B cell (primary cell): ENCODE measurements at regions of chr14 and their contacts with region 1.

Region 1: DNA sequence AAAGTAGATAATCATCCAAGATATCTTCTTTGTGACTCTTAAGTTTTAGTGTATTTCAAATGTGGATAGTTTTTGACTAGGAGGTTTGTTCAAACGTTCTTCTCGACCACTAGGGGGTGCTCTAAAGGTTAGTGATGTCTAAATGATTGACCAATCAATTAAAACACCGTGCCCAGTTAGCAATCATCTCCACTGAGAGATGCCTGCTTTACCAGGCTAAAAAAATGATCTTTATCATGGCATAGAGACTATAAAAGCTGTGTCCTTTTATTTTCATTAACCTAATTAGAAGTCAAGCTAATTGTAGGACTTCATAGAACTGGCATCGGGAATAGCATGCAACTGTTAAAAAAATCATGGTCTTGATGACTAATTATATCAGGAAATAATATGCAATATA is 153.9 kb downstream of the PRKCH start:
- DNase-seq: peak; percentile 81
- ATAC-seq: no peak
- H3K4me3 ChIP-seq: no peak overlapping the region
- H3K4me3 Mint-ChIP-seq: peak overlapping the region; percentile 53
- H3K27ac ChIP-seq: peak overlapping the region; percentile 97 to 98
- H3K27ac Mint-ChIP-seq: peak overlapping the region; percentile 86
- H3K4me1 ChIP-seq: peaks cover 90 to 96% of the 10 kb centered on the region in 2 donors
- H3K4me1 Mint-ChIP-seq: peaks cover 93% of the 10 kb centered on the region
- H3K27me3 ChIP-seq: no peaks in the 10 kb centered on the region
- H3K27me3 Mint-ChIP-seq: no peaks in the 10 kb centered on the region
- CTCF ChIP-seq: peak; percentile 80

Region 2: DNA sequence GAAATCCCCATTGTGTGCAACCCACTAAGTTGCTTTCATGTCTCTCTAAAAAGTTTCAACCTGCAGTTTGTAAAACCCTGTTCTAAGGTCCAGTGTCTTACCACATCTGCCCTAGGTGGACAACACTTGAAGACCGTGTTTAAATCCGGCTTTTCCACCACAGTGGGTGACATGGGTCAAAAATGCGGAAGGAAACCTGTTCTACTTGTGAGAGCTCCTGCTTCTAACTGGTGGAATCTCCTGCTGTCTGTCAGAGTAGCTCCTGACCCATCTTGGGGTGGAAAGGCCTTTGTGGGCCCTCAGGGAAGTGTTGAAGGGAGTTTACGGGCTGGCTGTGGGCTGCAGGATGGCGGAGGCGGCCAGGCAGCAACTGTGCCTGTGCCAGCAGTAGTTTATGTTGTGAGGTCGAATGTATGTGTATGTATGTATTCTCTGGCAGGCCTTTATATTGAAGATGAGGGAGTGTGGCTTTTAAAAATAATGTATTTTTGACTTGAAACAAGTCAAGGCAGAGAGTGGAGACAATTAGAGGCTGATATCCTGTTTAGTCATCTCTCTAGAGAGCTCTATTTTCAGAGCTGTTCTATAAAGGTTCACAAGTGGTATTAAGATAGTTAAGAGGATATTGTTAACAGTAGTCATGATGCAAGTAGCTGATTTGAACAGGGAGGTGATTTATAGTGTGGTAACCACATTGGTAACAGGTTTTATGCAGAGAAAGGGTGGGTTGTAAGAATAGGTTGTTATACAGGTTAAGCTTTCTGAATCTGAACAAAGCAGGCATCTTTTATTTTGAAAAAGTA is 86.9 kb before region 1 on chr14:
- CTCF ChIA-PET with region 1: no interaction called
- POLR2A ChIA-PET with region 1: no interaction called
- intact Hi-C with region 1: no loop called
- DNase-seq: peak; percentile 40
- ATAC-seq: peak; percentile 39
- H3K4me3 ChIP-seq: no peak overlapping the region
- H3K4me3 Mint-ChIP-seq: peak overlapping the region; percentile 48
- H3K27ac ChIP-seq: peak overlapping the region; percentile 7 to 13
- H3K27ac Mint-ChIP-seq: peak overlapping the region; percentile 33
- H3K4me1 ChIP-seq: peaks cover 8 to 14% of the 10 kb centered on the region in 2 donors
- H3K4me1 Mint-ChIP-seq: peaks cover 18% of the 10 kb centered on the region
- H3K27me3 ChIP-seq: no peaks in the 10 kb centered on the region
- H3K27me3 Mint-ChIP-seq: peaks cover 5% of the 10 kb centered on the region
- CTCF ChIP-seq: no peak

Region 3: DNA sequence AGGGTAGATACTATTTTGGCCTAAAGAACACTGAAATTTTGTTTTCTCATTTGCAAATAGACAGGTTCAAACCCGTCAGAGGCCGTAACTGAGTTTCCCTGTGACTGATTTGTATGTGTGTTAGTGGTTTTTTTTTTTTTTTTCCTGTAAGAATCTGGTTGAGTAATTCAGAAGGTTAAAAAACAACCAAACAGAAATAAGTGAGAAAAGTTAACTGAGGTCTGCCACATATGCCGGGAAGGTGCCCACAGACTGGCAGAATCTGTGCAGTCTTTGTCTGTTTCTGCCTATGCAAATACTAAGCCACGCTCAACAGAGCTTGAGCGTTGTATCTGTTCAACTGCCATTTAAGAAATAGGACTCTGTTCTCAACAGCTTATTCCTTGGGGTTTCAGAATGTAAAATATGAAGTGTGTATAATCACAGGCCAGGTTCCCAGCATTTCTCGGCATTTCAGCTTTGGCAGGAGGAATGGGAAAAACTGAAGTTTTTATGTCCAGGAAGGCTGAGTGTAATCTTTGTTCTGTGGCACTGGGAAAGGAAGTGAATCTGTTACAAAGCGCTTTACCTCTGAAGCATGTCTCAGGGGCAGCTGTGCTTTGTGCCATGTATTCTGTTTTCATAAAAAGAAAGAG is 28.0 kb after region 1 on chr14:
- CTCF ChIA-PET with region 1: interaction called, 177 read pairs
- POLR2A ChIA-PET with region 1: interaction called, 88 read pairs
- intact Hi-C with region 1: loop called (anchors 1 kb)
- DNase-seq: peak; percentile 90
- ATAC-seq: peak; percentile 92
- H3K4me3 ChIP-seq: peak overlapping the region in 4 of 5 experiments; percentile 11 to 55 (median 34)
- H3K4me3 Mint-ChIP-seq: peak overlapping the region; percentile 84
- H3K27ac ChIP-seq: peak overlapping the region; percentile 89 to 91
- H3K27ac Mint-ChIP-seq: peak overlapping the region; percentile 98
- H3K4me1 ChIP-seq: peaks cover 85 to 90% of the 10 kb centered on the region in 2 donors
- H3K4me1 Mint-ChIP-seq: peaks cover 88% of the 10 kb centered on the region
- H3K27me3 ChIP-seq: no peaks in the 10 kb centered on the region
- H3K27me3 Mint-ChIP-seq: no peaks in the 10 kb centered on the region
- CTCF ChIP-seq: no peak

Region 4: DNA sequence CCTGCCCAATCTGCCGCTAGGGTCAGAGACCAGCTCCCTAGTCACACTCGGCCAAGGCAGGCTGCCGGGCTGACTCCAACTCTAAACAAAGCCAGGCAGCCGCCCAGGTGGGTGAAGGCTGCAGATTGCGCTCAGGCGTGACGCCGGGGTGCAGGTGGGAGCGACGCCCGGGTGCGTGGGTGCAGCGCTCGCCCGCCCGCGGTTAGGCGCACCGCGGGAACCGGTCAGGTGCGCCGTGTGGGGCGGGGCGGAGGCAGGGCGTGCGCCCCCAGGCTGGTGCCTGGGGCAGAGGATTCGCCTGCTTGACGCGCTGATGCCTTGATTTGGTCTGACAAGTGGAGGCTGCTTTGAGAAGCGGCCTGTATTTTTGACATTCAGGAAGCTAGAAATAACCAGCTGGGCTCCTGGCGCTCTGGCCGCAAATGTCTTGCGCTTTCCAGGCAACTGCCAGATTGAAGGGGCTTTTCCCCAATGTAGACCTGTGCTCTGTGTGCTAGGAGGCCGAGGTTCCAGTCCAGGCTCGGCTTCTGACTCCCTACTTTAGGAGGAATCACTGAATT is 93.3 kb after region 1 on chr14:
- CTCF ChIA-PET with region 1: interaction called, 76 read pairs
- POLR2A ChIA-PET with region 1: interaction called, 15 read pairs
- intact Hi-C with region 1: loop called (anchors 1 kb)
- DNase-seq: peak; percentile 94
- ATAC-seq: peak; percentile 92
- H3K4me3 ChIP-seq: peak overlapping the region; percentile 31 to 58 (median 42)
- H3K4me3 Mint-ChIP-seq: peak overlapping the region; percentile 84
- H3K27ac ChIP-seq: peak overlapping the region; percentile 77 to 91
- H3K27ac Mint-ChIP-seq: peak overlapping the region; percentile 93
- H3K4me1 ChIP-seq: peaks cover 41 to 48% of the 10 kb centered on the region in 2 donors
- H3K4me1 Mint-ChIP-seq: peaks cover 57% of the 10 kb centered on the region
- H3K27me3 ChIP-seq: no peaks in the 10 kb centered on the region
- H3K27me3 Mint-ChIP-seq: no peaks in the 10 kb centered on the region
- CTCF ChIP-seq: peak; percentile 31

Region 5: DNA sequence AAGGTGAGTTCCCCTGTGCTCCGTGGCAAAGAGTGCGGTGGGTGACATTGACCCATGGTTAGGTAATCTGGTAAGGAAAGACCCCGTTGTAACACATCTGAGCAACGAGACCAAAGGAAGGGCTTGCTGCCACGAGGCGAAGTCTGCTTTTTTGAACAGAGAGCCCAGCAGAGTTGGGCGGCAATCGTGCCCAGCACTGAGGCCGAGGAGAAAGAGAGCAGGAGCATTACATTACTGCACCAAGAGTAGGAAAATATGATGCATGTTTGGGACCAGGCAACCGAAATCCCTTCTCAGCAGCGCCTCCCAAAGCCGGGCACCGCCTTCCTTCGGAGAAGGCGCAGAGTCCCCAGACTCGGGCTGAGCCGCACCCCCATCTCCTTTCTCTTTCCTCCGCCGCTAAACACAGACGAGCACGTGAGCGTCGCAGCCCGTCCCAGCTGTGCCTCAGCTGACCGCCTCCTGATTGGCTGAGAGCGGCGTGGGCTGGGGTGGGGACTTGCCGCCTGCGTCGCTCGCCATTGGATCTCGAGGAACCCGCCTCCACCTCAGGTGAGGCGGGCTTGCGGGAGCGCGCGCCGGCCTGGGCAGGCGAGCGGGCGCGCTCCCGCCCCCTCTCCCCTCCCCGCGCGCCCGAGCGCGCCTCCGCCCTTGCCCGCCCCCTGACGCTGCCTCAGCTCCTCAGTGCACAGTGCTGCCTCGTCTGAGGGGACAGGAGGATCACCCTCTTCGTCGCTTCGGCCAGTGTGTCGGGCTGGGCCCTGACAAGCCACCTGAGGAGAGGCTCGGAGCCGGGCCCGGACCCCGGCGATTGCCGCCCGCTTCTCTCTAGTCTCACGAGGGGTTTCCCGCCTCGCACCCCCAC is 219.7 kb after region 1 on chr14 and contains the start of gene HIF1A:
- CTCF ChIA-PET with region 1: interaction called, 16 read pairs
- POLR2A ChIA-PET with region 1: interaction called, 6 read pairs
- intact Hi-C with region 1: loop called (anchors 1 kb)
- DNase-seq: peak; percentile 99
- ATAC-seq: peak; percentile 94
- H3K4me3 ChIP-seq: peak within 1 kb of the TSS; percentile 92 to 98 (median 94)
- H3K4me3 Mint-ChIP-seq: peak within 1 kb of the TSS; percentile 97
- H3K27ac ChIP-seq: peak within 1 kb of the TSS; percentile 92 to 94
- H3K27ac Mint-ChIP-seq: peak within 1 kb of the TSS; percentile 97
- H3K4me1 ChIP-seq: peaks cover 20 to 35% of the 10 kb centered on the region in 2 donors
- H3K4me1 Mint-ChIP-seq: peaks cover 35% of the 10 kb centered on the region
- H3K27me3 ChIP-seq: no peaks in the 10 kb centered on the region
- H3K27me3 Mint-ChIP-seq: no peaks in the 10 kb centered on the region
- CTCF ChIP-seq: no peak
- total RNA-seq, gene HIF1A: 261 and 264 TPM in 2 replicates

Region 6: GRCh38 chr14:61730756-61731373 is 255.5 kb after region 1 on chr14:
- CTCF ChIA-PET with region 1: interaction called, 41 read pairs
- POLR2A ChIA-PET with region 1: interaction called, 4 read pairs
- intact Hi-C with region 1: loop called (anchors 2 kb)
- DNase-seq: peak; percentile 51
- ATAC-seq: no peak
- H3K4me3 ChIP-seq: no peak overlapping the region
- H3K4me3 Mint-ChIP-seq: no peak overlapping the region
- H3K27ac ChIP-seq: peak overlapping the region in 1 of 2 donors; percentile 50
- H3K27ac Mint-ChIP-seq: peak overlapping the region; percentile 68
- H3K4me1 ChIP-seq: peaks cover 12% of the 10 kb centered on the region in 2 donors
- H3K4me1 Mint-ChIP-seq: peaks cover 42% of the 10 kb centered on the region
- H3K27me3 ChIP-seq: no peaks in the 10 kb centered on the region
- H3K27me3 Mint-ChIP-seq: no peaks in the 10 kb centered on the region
- CTCF ChIP-seq: peak; percentile 68

Region 7: GRCh38 chr14:61761959-61762786 is 286.9 kb after region 1 on chr14 and contains the start of gene SNAPC1:
- CTCF ChIA-PET with region 1: interaction called, 14 read pairs
- POLR2A ChIA-PET with region 1: interaction called, 3 read pairs
- intact Hi-C with region 1: no loop called
- DNase-seq: peak; percentile 99
- ATAC-seq: peak; percentile 98
- H3K4me3 ChIP-seq: peak within 1 kb of the TSS; percentile 93 to 95 (median 95)
- H3K4me3 Mint-ChIP-seq: peak within 1 kb of the TSS; percentile 95
- H3K27ac ChIP-seq: peak within 1 kb of the TSS; percentile 90 to 91
- H3K27ac Mint-ChIP-seq: peak within 1 kb of the TSS; percentile 99
- H3K4me1 ChIP-seq: peaks cover 19 to 22% of the 10 kb centered on the region in 2 donors
- H3K4me1 Mint-ChIP-seq: peaks cover 36% of the 10 kb centered on the region
- H3K27me3 ChIP-seq: no peaks in the 10 kb centered on the region
- H3K27me3 Mint-ChIP-seq: no peaks in the 10 kb centered on the region
- CTCF ChIP-seq: no peak
- total RNA-seq, gene SNAPC1: 6.6 and 7.1 TPM in 2 replicates